ENCODE measurements at regions of chr2 and their contacts with region 1.

Region 1: GRCh38 chr2:237085248-237086221 is at the start of gene COPS8:
- DNase-seq: peak; percentile 94
- ATAC-seq: peak; percentile 99
- H3K4me3 Mint-ChIP-seq: peak within 1 kb of the TSS; percentile 96
- H3K27ac Mint-ChIP-seq: peak within 1 kb of the TSS; percentile 96
- H3K4me1 Mint-ChIP-seq: peaks cover 20% of the 10 kb centered on the region
- H3K27me3 Mint-ChIP-seq: no peaks in the 10 kb centered on the region
- CTCF ChIP-seq: no peak
- total RNA-seq, gene COPS8: 51.5 to 54.2 TPM

Region 2: DNA sequence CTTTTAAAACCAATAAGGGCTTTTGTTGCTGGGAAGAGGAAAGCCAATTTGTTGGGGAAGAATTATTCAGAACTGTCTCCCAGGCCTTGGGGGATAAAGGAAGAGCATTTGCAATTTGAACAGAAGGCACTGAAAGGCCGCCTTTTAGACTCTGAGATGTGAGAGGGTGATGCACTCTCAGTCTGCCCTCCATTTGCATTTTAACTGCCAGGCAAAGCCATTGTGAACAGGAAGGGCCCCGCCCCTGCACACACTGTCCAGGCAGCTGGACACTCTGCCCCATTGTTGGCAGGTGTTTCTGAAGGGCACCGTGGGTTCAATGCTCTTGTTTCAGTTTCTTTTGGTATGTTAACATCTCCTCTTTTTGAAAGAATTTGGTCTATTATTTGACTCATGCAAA is 169.4 kb before region 1 on chr2:
- CTCF ChIA-PET with region 1: no interaction called
- POLR2A ChIA-PET with region 1: no interaction called
- intact Hi-C with region 1: no loop called
- DNase-seq: no peak
- ATAC-seq: no peak
- H3K4me3 Mint-ChIP-seq: no peak overlapping the region
- H3K27ac Mint-ChIP-seq: no peak overlapping the region
- H3K4me1 Mint-ChIP-seq: no peaks in the 10 kb centered on the region
- H3K27me3 Mint-ChIP-seq: peaks cover 2% of the 10 kb centered on the region
- CTCF ChIP-seq: no peak

Region 3: DNA sequence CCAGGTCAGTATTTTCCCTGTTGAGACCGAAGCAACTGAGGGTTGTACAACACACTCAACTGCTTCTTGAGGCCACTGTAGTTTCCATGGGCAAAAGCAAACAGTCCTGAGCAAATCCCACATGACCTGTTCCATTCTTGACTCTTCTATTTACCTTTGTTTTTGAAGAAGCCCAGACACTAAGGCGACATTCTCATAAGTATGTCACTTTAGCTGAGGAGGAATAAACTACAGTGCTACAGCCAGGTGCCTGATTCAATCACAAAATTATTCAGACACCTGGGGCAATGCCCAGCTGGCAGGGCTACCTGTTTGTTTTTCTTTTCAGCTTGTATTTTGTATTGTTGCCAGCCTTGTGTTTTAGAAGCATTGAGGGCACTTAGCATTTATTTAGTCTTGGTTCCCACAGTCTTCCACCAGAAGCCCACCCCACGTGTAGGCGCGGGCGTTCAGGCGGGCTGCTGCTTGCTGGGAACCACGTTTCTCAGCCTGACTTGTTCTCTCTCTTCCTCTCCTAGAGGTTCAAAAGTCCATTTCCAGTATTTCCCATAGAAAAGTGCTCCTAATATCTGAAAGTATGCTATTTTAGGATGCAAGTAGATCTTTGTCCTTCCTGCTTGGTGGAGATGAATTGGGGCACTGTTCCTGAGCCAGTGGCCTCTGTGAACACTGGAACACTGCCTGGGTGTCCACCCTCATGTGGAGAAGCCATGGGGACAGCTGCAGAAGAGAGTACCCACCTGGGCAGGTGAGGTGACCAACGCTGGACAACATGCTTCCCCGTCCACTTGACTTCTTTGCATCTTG is 98.8 kb before region 1 on chr2:
- CTCF ChIA-PET with region 1: no interaction called
- POLR2A ChIA-PET with region 1: no interaction called
- intact Hi-C with region 1: no loop called
- DNase-seq: no peak
- ATAC-seq: no peak
- H3K4me3 Mint-ChIP-seq: no peak overlapping the region
- H3K27ac Mint-ChIP-seq: no peak overlapping the region
- H3K4me1 Mint-ChIP-seq: peaks cover 3% of the 10 kb centered on the region
- H3K27me3 Mint-ChIP-seq: peaks cover 3% of the 10 kb centered on the region
- CTCF ChIP-seq: no peak

Region 4: GRCh38 chr2:237012577-237013267 is 72.8 kb before region 1 on chr2:
- CTCF ChIA-PET with region 1: no interaction called
- POLR2A ChIA-PET with region 1: no interaction called
- intact Hi-C with region 1: no loop called
- DNase-seq: no peak
- ATAC-seq: no peak
- H3K4me3 Mint-ChIP-seq: no peak overlapping the region
- H3K27ac Mint-ChIP-seq: no peak overlapping the region
- H3K4me1 Mint-ChIP-seq: no peaks in the 10 kb centered on the region
- H3K27me3 Mint-ChIP-seq: no peaks in the 10 kb centered on the region
- CTCF ChIP-seq: no peak

Region 5: DNA sequence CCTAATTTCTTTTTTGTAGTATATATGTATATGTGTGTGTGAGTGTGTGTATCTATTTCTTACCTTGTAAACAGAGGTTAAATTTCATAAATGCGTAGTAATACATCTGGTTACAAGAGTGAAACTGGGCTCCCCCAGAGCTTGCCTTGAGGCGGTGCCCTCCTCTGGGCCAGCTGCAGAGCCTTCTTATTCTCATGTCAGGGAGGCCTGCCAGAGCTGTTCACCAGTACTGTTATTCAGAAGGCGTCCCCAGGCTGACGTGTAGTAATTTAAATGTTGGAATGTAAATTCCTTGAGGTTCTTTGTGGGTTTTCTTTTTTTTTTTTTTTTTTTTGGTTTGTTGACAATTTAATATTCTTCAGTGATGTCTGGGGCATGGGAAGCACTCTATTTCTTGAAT is 11.4 kb after region 1 on chr2:
- CTCF ChIA-PET with region 1: interaction called, 11 read pairs
- POLR2A ChIA-PET with region 1: interaction called, 4 read pairs
- intact Hi-C with region 1: no loop called
- DNase-seq: no peak
- ATAC-seq: no peak
- H3K4me3 Mint-ChIP-seq: no peak overlapping the region
- H3K27ac Mint-ChIP-seq: no peak overlapping the region
- H3K4me1 Mint-ChIP-seq: no peaks in the 10 kb centered on the region
- H3K27me3 Mint-ChIP-seq: no peaks in the 10 kb centered on the region
- CTCF ChIP-seq: no peak

Region 6: DNA sequence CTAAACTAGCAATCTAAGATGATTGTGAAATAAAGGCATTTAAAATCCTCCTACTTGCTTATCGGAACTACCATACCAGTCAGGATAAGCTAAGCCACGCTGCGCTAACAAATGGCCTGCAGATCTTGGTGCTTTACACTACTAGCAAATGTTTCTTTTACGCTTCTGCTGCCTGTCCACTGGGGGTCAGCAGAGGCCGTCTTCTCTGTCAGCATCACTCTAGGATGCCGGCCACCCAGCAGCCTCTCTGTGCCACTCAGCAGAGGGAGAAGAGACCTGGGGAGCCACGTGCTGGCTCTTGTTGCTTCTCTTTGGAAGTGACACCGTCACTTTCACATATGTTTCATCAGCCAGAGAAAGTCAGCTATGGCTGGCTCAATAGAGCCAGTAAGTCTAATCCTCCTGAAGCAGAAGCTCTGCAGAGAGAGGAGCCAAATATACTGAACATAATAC is 36.7 kb after region 1 on chr2:
- CTCF ChIA-PET with region 1: interaction called, 14 read pairs
- POLR2A ChIA-PET with region 1: no interaction called
- intact Hi-C with region 1: no loop called
- DNase-seq: peak; percentile 75
- ATAC-seq: peak; percentile 100
- H3K4me3 Mint-ChIP-seq: no peak overlapping the region
- H3K27ac Mint-ChIP-seq: peak overlapping the region; percentile 65
- H3K4me1 Mint-ChIP-seq: peaks cover 3% of the 10 kb centered on the region
- H3K27me3 Mint-ChIP-seq: peaks cover 2% of the 10 kb centered on the region
- CTCF ChIP-seq: peak; percentile 68

Region 7: GRCh38 chr2:237181844-237182243 is 96.3 kb after region 1 on chr2:
- CTCF ChIA-PET with region 1: no interaction called
- POLR2A ChIA-PET with region 1: no interaction called
- intact Hi-C with region 1: no loop called
- DNase-seq: no peak
- ATAC-seq: no peak
- H3K4me3 Mint-ChIP-seq: no peak overlapping the region
- H3K27ac Mint-ChIP-seq: no peak overlapping the region
- H3K4me1 Mint-ChIP-seq: no peaks in the 10 kb centered on the region
- H3K27me3 Mint-ChIP-seq: peaks cover 22% of the 10 kb centered on the region
- CTCF ChIP-seq: no peak